AG04450 (cell line): ENCODE measurements at regions of chr11 and their contacts with region 1.

Region 1: GRCh38 chr11:83521647-83522596 is 235.8 kb upstream of the CCDC90B start:
- DNase-seq: no peak
- H3K4me3 ChIP-seq: no peak overlapping the region
- H3K27ac ChIP-seq: no peak overlapping the region
- H3K27me3 ChIP-seq: no peaks in the 10 kb centered on the region
- CTCF ChIP-seq: peak; percentile 53

Region 2: DNA sequence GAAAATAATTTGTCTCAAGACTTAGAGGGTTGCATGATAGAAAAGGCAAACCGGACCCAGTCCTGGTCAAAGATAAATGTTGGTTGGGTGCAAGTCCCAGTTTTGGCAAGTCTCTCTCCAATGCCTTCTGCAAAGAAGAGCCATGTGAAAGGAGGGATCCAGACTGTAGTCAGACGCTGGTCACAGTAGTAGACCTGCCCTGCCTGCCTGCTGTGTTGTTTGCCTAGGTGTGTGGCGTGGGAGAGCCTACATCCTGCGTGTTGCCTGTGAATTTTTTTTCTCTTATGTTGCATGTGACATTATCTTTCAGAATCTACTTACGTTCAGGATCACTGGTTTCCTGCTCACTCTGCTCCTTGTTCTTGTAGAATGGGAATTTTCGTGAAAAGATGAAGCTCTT is 38.1 kb before region 1 on chr11:
- CTCF ChIA-PET with region 1: no interaction called
- POLR2A ChIA-PET with region 1: no interaction called
- DNase-seq: no peak
- H3K4me3 ChIP-seq: no peak overlapping the region
- H3K27ac ChIP-seq: no peak overlapping the region
- H3K27me3 ChIP-seq: no peaks in the 10 kb centered on the region
- CTCF ChIP-seq: no peak

Region 3: DNA sequence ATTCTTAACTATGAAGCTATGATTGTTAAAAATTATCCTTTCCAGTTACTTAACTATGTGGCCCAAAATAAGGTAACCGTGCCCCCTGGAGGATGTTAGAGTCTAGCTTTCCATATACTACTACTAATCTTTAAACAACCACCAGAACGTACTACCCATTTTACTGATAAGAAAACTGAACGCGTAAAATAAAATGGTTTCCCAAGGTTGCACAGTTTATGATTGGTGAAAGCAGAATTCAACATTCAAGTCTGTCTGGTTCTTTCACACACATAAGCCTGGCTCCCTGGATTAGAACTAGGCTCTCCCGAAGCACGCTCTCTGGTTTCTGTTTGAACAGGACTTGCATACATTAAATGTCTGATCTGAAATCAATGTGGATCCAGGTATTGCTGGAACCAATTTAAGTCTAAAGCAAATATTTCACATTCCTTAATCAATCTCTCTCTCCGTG is 202.1 kb after region 1 on chr11:
- CTCF ChIA-PET with region 1: interaction called, 34 read pairs
- POLR2A ChIA-PET with region 1: no interaction called
- DNase-seq: peak; percentile 26
- H3K4me3 ChIP-seq: 0 out of 2 replicates have a peak overlapping the region, but pooled peaks have one; percentile 0
- H3K27ac ChIP-seq: no peak overlapping the region
- H3K27me3 ChIP-seq: peaks cover 7% of the 10 kb centered on the region
- CTCF ChIP-seq: peak; percentile 62